Heart right ventricle (tissue), 16 donors: ENCODE measurements at regions of chr4 and their contacts with region 1.

Region 1: DNA sequence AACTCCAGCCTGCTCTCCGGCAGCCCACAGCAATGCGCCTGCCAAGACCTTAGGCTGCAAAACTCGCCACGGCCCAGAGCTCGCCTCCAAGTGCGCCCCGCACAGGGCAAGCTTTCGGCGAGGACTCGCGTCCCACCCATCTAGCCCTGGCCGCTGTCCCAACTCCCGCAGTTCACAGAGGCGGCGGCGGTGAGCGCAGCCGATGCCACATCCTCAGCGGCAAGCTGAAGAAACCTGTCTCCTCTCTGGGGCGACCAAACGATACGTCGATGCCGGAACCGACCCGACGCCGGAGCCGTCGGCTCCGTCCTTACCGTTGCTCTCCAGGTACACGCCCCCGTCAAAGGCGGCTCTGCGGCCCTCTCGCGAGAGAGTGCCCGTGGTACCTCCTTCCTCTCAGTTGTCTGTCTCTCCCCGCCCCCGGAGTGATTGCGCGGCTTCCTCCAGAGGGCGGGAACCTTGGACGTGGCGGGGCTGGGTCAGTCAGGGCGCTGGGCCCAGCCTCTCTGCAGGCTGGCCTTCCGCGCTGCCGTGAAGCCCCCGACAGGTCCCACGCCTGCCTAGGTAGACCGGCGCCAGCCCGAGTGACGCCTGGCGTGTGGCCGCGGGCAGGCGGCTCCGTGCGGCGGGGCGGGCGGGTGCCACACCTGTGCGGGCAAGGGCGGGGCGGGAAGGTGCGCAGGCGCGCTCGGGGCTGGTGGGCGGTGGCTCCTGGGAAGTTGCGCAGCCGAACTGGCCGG is 380 bp upstream of the RAB33B start:
- DNase-seq: peak; percentile 98
- ATAC-seq: peak; percentile 97 to 99 (median 98)
- H3K4me3 ChIP-seq: peak overlapping the region; percentile 66 to 95 (median 84)
- H3K27ac ChIP-seq: peak overlapping the region; percentile 94 to 100 (median 98)
- H3K4me1 ChIP-seq: peaks cover 4 to 54% (median 49%) of the 10 kb centered on the region in 9 donors
- H3K27me3 ChIP-seq: no peaks in the 10 kb centered on the region
- CTCF ChIP-seq: peak in 3 of 9 donors; percentile 4 to 31 (median 24)

Region 2: DNA sequence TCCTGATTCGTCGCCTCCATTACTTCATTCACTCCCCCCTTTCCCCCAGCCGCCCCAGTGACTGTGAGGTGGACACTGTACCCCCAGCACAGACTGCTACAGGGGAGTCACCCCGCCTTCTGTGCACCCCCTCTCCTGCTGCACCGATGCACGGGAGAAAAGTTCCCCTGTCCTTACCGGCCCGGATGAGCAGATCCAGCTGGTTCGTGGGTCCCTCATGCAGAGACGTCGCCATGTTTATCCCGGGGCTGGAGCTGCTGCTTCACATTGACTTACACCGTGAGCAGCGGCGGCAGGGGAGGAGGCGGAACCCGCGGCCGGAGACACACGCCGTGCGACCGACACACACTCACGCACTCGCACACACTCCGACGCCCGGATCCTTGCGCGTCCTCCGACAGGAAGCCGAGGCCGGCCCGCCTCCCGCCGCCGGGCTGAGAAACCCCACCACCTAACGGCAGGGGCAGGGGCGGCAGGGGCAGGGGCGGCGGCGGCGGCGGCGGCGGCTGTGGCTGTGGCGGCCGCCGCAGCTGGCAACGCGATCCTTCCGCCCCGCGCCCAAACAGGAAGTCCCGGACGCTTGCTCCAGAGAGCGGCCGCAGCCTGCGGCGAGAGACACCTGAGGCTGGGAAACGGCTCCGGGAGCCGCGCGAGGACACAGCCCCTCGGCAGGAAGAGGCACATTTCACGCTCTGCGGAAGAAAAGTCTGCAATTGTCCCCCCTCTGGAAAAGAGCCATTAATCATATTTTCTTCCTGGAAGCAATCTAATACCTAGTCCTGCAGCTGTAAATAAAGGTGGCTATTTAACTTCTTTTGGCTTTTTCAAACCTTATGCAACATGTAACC is 369.4 kb before region 1 on chr4:
- intact Hi-C with region 1: loop called in 1 of 10 experiments (anchors 10 kb)
- DNase-seq: peak; percentile 89 to 90
- ATAC-seq: peak; percentile 71 to 92 (median 80)
- H3K4me3 ChIP-seq: peak overlapping the region; percentile 64 to 89 (median 78)
- H3K27ac ChIP-seq: peak overlapping the region; percentile 88 to 95 (median 93)
- H3K4me1 ChIP-seq: peaks cover 2 to 44% (median 38%) of the 10 kb centered on the region in 9 donors
- H3K27me3 ChIP-seq: no peaks in the 10 kb centered on the region
- CTCF ChIP-seq: peak in 8 of 9 donors; percentile 10 to 53 (median 39)

Region 3: GRCh38 chr4:139227729-139228404 is 225.7 kb before region 1 on chr4:
- intact Hi-C with region 1: no loop called
- DNase-seq: no peak
- ATAC-seq: peak in 3 of 8 donors; percentile 31 to 48 (median 44)
- H3K4me3 ChIP-seq: no peak overlapping the region
- H3K27ac ChIP-seq: no peak overlapping the region
- H3K4me1 ChIP-seq: peaks cover 0 to 11% (median 0%) of the 10 kb centered on the region in 9 donors
- H3K27me3 ChIP-seq: no peaks in the 10 kb centered on the region
- CTCF ChIP-seq: peak in 3 of 9 donors; percentile 12 to 25 (median 20)

Region 4: DNA sequence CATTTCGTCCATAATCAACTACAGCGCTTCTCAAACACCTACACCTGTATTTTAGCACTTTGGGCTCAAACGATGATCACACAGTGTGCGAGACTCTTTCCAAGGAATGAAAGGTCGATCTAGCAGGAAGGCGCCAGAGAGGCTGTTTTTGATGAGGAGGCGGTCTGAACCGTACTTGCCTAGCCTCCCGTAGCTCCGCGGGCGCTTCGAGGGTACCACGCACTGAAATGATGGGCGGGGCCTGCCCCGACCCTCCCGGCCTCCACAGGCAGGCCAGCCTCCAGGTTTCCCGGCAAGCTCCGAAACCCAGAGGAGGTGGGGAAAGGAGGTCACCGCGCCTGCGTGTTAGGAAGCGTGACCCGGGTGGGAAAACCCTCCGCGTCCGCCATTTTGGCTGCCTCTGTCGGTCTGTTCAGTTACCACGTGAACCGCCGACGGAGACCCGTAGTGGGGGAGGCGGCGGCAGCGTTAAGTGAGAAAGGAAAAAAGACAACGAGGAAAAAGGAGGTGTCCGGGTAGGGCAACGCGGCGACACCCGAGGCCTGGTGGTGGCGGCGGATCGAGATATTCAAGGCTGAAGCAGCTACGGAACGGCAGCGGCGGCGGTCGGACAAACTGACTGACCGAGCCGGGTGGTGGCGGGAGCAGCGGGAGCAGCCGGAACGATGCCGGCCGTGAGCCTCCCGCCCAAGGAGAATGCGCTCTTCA is 152.3 kb before region 1 on chr4 and contains the start of gene NAA15:
- intact Hi-C with region 1: loop called in 1 of 10 experiments (anchors 5 kb)
- DNase-seq: peak; percentile 98 to 99
- ATAC-seq: peak; percentile 97 to 98 (median 98)
- H3K4me3 ChIP-seq: peak within 1 kb of the TSS; percentile 72 to 99 (median 84)
- H3K27ac ChIP-seq: peak within 1 kb of the TSS; percentile 59 to 94 (median 90)
- H3K4me1 ChIP-seq: peaks cover 0 to 67% (median 36%) of the 10 kb centered on the region in 9 donors
- H3K27me3 ChIP-seq: no peaks in the 10 kb centered on the region
- CTCF ChIP-seq: no peak
- total RNA-seq, gene NAA15: 26.1 to 45.4 (median 33.7) TPM

Region 5: DNA sequence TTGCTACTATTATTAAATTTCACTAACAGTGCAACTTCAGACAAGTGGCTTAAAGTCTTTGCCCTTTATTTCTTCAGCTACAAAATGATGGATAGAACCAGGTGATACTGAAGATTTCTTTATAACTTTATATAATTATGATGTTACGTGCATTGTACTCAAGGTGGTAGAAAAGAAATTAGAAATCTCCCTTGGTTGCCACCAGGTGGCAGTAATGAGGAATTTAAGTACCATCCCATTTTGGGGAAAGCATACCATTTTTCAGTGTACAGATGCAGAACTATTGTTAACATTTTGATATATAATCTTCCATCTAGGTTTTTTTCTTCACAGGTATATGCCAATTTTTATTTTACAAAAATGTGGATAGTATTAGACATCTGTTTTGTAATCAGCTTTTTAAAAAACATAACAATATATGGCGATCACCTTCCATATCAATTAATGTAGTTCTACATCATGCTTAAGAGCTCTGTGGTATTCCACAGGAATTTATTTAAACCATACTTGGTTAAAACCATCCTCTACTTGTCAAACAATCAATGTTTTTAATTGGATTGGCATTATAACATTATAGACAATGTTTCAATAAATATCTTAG is 37.4 kb before region 1 on chr4:
- intact Hi-C with region 1: loop called in 4 of 10 experiments (anchors 2 to 5 kb)
- DNase-seq: no peak
- ATAC-seq: no peak
- H3K4me3 ChIP-seq: no peak overlapping the region
- H3K27ac ChIP-seq: no peak overlapping the region
- H3K4me1 ChIP-seq: peaks cover 0 to 26% (median 13%) of the 10 kb centered on the region in 9 donors
- H3K27me3 ChIP-seq: no peaks in the 10 kb centered on the region
- CTCF ChIP-seq: peak; percentile 51 to 82 (median 71)

Region 6: DNA sequence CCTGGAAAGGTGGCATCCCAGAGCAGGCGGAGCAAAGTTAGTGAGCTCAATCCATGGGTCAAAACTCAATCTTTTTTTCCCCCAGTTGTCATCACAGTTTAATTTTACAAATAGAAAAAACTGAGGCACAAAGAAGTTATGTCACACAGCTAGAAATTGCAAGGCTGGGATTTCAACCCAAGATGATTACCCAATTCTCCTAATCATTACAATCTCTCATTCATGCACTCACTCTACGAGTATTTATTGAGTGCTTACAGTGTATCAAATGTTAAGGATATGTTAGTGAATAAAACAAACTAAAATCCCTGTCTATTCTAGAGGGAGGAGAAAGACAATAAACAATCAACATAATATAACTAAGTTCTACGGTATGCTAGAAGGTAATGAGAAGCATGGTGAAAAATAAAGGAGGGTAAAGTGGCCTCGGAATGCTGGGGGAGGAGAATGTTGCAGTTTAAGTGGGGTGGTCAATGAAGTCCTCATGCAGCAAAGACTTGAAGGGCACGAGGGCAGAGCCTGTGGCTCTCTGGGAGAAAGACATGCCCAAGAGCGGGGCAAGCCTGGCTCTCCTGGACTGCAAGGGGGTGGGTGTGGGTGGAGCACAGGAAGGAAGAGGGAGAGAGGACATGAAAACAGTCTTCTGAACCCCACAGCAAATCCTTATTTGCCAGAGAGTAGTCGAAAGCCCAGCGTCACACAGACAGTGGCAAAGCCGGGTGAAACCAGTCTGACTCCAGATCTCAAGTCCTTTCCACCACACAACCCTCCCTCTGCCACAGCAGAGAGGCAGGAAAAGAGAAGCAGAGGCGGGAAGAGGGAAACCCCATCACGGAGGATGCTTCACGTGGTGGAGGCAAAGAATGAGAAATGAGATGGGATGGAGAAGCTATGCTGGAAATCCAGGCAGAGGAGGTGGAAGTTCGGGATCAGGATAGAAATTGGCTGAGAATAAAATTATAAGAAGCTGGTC is 48.7 kb after region 1 on chr4:
- intact Hi-C with region 1: loop called in 1 of 10 experiments (anchors 5 kb)
- DNase-seq: no peak
- ATAC-seq: no peak
- H3K4me3 ChIP-seq: no peak overlapping the region
- H3K27ac ChIP-seq: no peak overlapping the region
- H3K4me1 ChIP-seq: peaks cover 0 to 20% (median 4%) of the 10 kb centered on the region in 9 donors
- H3K27me3 ChIP-seq: no peaks in the 10 kb centered on the region
- CTCF ChIP-seq: no peak

Region 7: GRCh38 chr4:139554893-139555704 is 101.6 kb after region 1 on chr4:
- intact Hi-C with region 1: loop called in 3 of 10 experiments (anchors 2 to 5 kb)
- DNase-seq: peak; percentile 91 to 95
- ATAC-seq: peak; percentile 79 to 85 (median 82)
- H3K4me3 ChIP-seq: peak overlapping the region; percentile 65 to 98 (median 92)
- H3K27ac ChIP-seq: peak overlapping the region; percentile 92 to 99 (median 98)
- H3K4me1 ChIP-seq: peaks cover 10 to 77% (median 67%) of the 10 kb centered on the region in 9 donors
- H3K27me3 ChIP-seq: no peaks in the 10 kb centered on the region
- CTCF ChIP-seq: no peak